Activated B cell treated with CpG ODN at 0.5 μM for 24 hours (primary cell): ENCODE measurements at regions of chr14 and their contacts with region 1.

Region 1: DNA sequence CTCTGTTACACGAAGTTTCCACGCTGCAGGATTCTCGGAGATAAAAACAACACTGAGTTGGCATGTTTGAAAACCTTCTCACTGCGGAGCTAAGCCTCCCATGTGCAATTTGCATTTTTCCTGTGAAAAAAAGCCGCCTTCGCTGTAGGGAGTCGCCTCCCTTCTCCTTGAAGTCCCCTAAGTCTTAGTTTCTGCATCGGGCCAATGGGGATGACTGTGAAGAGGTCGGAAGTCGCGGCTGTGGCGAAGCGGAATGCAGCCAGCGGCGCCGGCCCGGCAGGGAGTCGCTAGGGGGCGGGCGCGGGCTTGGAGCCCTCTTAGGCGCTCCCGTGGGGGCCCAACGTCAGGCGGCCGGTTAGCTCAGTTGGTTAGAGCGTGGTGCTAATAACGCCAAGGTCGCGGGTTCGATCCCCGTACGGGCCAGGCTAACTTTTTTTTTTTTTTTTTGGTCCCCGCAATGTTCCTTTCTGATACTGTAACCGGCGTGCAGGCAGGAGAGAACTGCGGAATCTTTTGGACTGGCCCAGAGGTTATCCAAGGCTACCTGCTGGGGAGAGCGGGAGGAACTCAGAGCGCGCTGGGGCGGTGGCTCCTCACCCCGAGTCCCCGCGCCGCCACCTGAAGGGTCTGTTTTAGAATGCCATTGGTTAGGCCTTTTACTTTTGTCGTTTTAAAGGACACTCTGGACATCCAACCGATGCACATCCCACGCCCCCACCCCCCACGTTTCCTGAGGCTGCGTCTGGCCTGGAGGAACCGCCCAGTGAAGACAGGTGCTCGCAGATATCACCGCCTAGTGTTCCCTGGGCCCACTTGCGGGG is 2.6 kb upstream of the ZNF839 start:
- DNase-seq: peak; percentile 99
- ATAC-seq: peak; percentile 71
- H3K4me3 Mint-ChIP-seq: peak overlapping the region; percentile 96
- H3K27ac Mint-ChIP-seq: peak overlapping the region; percentile 89
- H3K4me1 Mint-ChIP-seq: peaks cover 63% of the 10 kb centered on the region
- H3K27me3 Mint-ChIP-seq: no peaks in the 10 kb centered on the region
- CTCF ChIP-seq: no peak

Region 2: DNA sequence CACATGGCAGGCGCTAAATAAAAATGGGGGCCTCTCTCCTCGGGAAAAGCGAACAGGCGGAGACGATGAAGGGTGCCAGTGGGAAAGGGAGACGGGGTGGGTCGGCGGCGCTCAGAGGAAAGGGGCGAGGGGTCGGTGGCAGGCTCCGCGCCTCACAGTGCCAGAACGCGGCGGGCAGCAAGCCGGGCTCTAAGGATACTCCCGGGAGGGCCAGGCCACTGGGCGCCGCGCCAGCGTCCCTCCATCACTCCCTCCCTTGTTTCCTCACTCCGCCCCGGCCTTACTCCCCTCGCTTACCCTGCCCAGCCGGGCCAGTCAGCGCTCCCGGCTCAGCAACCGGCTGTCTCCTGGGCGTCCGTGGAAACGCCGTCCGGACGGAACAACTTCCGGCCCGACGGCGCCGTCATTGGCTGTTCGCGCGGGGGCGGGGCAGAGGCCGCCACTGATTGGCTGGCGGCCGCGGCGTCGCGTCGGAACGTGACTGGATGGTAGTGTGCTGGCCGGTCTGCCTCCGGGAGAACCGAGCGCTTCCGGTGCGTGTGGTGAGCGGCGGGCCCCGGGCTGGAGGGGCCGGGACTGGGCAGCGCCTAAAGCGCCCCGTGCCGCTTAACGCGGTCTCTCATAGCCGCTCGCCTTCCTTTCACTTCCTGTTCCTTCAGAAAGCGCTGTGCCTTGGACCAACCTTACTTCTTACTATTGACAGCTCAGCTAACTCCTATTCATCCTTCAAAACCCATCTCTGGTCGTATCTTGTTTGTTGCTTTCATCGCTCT is 1940.8 kb before region 1 on chr14:
- CTCF ChIA-PET with region 1: no interaction called
- POLR2A ChIA-PET with region 1: no interaction called
- intact Hi-C with region 1: loop called (anchors 5 kb)
- DNase-seq: peak; percentile 93
- ATAC-seq: peak; percentile 81
- H3K4me3 Mint-ChIP-seq: peak within 1 kb of the TSS; percentile 95
- H3K27ac Mint-ChIP-seq: peak within 1 kb of the TSS; percentile 95
- H3K4me1 Mint-ChIP-seq: peaks cover 48% of the 10 kb centered on the region
- H3K27me3 Mint-ChIP-seq: no peaks in the 10 kb centered on the region
- CTCF ChIP-seq: no peak

Region 3: GRCh38 chr14:101809671-101810514 is 507.1 kb before region 1 on chr14:
- CTCF ChIA-PET with region 1: no interaction called
- POLR2A ChIA-PET with region 1: no interaction called
- intact Hi-C with region 1: loop called (anchors 1 kb)
- DNase-seq: peak; percentile 66
- ATAC-seq: peak; percentile 91
- H3K4me3 Mint-ChIP-seq: peak overlapping the region; percentile 97
- H3K27ac Mint-ChIP-seq: peak overlapping the region; percentile 99
- H3K4me1 Mint-ChIP-seq: peaks cover 55% of the 10 kb centered on the region
- H3K27me3 Mint-ChIP-seq: no peaks in the 10 kb centered on the region
- CTCF ChIP-seq: no peak

Region 4: GRCh38 chr14:102046343-102047278 is 270.3 kb before region 1 on chr14:
- CTCF ChIA-PET with region 1: interaction called, 15 read pairs
- POLR2A ChIA-PET with region 1: interaction called, 3 read pairs
- intact Hi-C with region 1: loop called (anchors 1 kb)
- DNase-seq: no peak
- ATAC-seq: peak; percentile 50
- H3K4me3 Mint-ChIP-seq: no peak overlapping the region
- H3K27ac Mint-ChIP-seq: no peak overlapping the region
- H3K4me1 Mint-ChIP-seq: no peaks in the 10 kb centered on the region
- H3K27me3 Mint-ChIP-seq: no peaks in the 10 kb centered on the region
- CTCF ChIP-seq: no peak

Region 5: GRCh38 chr14:102220031-102220430 is 96.9 kb before region 1 on chr14:
- CTCF ChIA-PET with region 1: no interaction called
- POLR2A ChIA-PET with region 1: no interaction called
- intact Hi-C with region 1: loop called (anchors 5 kb)
- DNase-seq: peak; percentile 52
- ATAC-seq: peak; percentile 99
- H3K4me3 Mint-ChIP-seq: no peak overlapping the region
- H3K27ac Mint-ChIP-seq: peak overlapping the region; percentile 7
- H3K4me1 Mint-ChIP-seq: peaks cover 17% of the 10 kb centered on the region
- H3K27me3 Mint-ChIP-seq: no peaks in the 10 kb centered on the region
- CTCF ChIP-seq: no peak

Region 6: GRCh38 chr14:102437997-102438915 is 121.3 kb after region 1 on chr14:
- CTCF ChIA-PET with region 1: no interaction called
- POLR2A ChIA-PET with region 1: no interaction called
- intact Hi-C with region 1: no loop called
- DNase-seq: peak; percentile 61
- ATAC-seq: peak; percentile 71
- H3K4me3 Mint-ChIP-seq: no peak overlapping the region
- H3K27ac Mint-ChIP-seq: no peak overlapping the region
- H3K4me1 Mint-ChIP-seq: peaks cover 5% of the 10 kb centered on the region
- H3K27me3 Mint-ChIP-seq: no peaks in the 10 kb centered on the region
- CTCF ChIP-seq: no peak

Region 7: DNA sequence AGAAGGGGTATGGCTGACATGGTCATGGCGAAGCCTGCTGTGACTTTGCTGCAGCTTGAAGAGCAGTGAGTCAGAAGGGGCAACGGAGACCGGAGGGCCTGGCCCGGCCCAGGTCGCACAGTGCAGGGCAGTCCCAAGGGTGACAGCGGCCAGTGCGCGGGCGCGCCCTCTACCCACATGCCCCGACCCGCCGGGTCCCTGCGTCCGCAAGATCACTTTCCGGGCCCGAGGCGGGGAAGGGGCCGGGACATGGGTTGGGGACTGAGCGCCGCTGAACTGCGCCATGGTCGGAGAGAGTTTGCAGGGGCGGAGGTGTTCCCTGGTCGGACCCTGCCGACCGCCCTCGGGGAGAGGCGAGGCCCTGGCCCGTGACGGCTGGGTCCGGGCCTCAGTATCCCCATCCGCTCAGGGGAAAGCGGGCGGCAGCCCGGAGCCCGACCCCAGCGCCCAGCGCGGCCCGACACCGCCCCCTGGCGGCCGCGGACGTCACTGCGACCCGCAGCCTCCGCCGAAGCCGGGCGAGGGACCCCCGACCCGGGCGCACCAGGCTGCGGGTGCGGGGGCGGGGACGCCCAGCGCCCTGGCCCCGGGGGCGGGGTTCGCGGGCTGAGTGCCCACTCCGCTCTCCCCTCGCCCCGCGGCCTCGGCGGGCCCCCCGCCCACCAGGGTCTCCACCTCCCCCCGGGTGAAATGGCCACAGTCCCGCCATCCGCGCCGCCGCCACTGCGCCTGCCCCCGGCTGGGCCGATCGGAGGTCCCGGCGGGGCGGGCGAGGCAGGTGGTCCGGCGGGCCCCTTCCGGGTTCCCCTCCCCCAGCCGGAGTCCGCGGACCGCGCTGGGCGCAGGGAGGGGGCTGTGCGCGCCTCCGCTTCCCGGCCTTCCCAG is 199.8 kb after region 1 on chr14:
- CTCF ChIA-PET with region 1: interaction called, 5 read pairs
- POLR2A ChIA-PET with region 1: interaction called, 3 read pairs
- intact Hi-C with region 1: loop called (anchors 2 kb)
- DNase-seq: peak; percentile 79
- ATAC-seq: peak; percentile 88
- H3K4me3 Mint-ChIP-seq: peak overlapping the region; percentile 81
- H3K27ac Mint-ChIP-seq: no peak overlapping the region
- H3K4me1 Mint-ChIP-seq: peaks cover 3% of the 10 kb centered on the region
- H3K27me3 Mint-ChIP-seq: peaks cover 3% of the 10 kb centered on the region
- CTCF ChIP-seq: peak; percentile 48